OCI-LY7 (cell line): ENCODE measurements at regions of chr1 and their contacts with region 1.

Region 1: DNA sequence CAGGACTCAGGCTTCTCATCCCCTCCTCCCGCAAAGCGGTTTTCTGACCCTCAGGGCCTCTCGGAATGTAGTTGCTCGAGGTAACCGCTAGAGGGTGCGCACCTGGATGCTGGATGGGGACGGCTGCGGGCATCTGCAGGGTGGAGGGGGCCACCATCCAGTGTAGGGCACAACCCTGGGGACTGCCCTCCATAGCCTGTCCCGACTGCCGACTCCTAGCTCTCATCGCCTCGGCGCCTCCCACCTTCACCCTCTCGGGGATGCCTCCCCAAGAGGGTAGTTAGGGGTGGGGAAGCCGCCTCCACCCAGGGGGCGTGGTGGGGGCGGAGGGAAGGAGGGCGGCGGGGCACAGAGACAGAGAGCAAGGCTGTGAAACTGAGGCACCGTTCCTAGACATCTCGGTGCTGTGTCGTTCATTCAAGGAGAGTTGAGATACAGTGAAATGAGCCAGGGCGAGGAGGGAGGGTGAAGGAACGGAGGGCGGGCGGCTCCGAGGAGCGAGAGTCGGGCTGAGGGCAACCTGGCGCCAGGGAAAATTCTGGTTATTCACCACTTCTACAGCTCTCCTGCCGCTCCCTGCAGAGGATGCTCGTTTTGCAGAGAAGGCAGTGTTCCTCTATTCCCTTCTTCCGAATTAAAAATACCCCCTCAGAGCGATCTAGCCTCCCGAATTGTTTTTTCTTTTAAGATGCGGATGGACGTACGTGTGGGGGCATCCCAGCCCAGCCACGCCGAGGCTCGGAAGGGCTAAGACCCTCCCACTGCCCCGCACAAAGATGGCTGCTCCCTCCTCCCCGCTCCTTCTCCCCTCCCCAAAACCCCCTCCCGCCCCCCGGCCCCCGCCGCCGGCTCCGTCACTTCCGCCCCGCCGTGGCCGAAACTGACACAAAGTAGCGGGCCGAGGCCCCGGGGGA is at the start of gene ATP8B2:
- DNase-seq: peak; percentile 87
- H3K4me3 ChIP-seq: peak within 1 kb of the TSS; percentile 83
- H3K27ac ChIP-seq: peak within 1 kb of the TSS; percentile 19
- H3K4me1 ChIP-seq: peaks cover 22% of the 10 kb centered on the region
- CTCF ChIP-seq: peak; percentile 95
- total RNA-seq, gene ATP8B2: 20.3 and 28.8 TPM in 2 replicates

Region 2: DNA sequence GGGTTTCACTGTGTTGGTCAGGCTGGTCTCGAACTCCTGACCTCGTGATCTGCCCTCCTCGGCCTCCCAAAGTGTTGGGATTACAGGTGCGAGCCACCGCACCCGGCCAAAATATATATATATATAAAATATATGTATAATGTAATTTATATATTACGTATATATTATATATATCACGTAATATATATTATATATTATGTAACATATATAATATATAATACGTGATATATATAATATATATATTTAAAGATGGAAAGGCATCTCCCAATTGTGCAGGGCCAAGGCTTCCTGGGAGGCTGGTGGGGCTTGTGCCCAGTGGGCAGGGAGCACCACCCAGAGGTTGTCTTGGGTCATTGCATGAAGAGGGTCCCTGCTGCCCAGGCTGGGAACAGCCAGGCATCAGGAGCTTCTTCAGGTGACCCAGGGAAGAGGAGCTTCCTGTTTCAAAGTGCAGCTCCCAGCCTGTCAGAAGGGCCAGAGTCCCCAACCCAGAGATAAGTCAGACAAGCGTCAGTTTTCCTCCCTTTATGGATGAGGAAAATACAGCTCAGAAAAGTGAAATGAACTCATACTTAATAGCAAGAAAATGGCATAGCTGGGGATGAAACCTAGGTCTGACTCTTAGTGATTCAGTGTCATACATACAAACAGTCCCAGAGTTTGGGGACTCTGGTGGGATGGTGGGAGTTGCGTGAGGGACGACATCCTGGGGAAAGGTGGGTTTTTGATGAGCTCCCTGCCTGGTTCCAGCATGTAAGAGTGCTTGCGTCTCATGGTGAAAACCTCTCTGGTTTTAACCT is 221.5 kb after region 1 on chr1:
- CTCF ChIA-PET with region 1: no interaction called
- POLR2A ChIA-PET with region 1: no interaction called
- intact Hi-C with region 1: loop called (anchors 10 kb)
- DNase-seq: peak; percentile 72
- H3K4me3 ChIP-seq: no peak overlapping the region
- H3K27ac ChIP-seq: no peak overlapping the region
- H3K4me1 ChIP-seq: no peaks in the 10 kb centered on the region
- CTCF ChIP-seq: peak; percentile 81